Ascending aorta (tissue), 2 donors: ENCODE measurements at regions of chr9 and their contacts with region 1.

Region 1: DNA sequence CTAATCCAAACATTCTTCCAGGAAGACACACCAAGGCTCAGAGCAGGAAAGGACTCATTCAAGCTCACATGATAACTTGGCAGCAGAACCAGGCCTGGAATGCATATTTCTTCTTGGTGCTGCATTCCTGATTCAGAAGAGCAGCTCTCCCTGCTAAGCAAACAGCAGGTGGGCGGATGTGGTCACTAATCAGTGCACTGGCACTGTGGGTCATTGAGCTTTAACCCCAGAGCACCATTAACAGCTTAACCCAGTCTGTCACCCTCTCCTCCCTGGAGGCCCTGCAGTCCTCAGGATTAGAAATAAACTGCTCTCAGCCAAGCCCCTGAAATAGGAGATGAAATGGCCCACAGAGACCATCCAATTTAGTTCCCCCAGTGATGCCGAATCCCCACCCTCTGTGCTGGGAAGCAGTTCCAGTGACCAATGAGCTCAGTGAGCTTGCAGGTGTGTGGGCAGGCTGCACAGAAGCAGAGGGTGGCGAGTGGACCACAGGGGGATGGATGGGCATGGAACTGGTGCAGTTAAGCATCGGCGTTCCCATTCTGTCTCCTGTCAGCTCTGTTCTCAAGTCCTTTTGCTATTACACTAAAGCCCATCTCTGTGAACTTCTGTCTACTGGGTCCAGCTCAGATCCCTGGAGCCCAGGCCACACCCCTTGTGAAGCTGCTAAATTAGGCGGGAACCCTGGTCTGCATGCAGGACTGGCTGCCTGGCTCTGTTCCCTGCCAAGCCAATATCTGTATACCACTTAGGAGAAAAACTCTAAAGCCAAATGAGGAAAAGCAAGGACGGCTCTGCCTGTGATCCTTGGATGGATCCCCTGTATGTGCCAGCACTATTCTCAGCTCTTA is 16.6 kb upstream of the MEGF9 start:
- DNase-seq: peak in 1 of 2 donors; percentile 82
- H3K4me3 ChIP-seq: no peak overlapping the region
- H3K27ac ChIP-seq: peak overlapping the region; percentile 68 to 85
- H3K4me1 ChIP-seq: peaks cover 7 to 24% of the 10 kb centered on the region in 2 donors
- H3K27me3 ChIP-seq: no peaks in the 10 kb centered on the region
- CTCF ChIP-seq: no peak

Region 2: DNA sequence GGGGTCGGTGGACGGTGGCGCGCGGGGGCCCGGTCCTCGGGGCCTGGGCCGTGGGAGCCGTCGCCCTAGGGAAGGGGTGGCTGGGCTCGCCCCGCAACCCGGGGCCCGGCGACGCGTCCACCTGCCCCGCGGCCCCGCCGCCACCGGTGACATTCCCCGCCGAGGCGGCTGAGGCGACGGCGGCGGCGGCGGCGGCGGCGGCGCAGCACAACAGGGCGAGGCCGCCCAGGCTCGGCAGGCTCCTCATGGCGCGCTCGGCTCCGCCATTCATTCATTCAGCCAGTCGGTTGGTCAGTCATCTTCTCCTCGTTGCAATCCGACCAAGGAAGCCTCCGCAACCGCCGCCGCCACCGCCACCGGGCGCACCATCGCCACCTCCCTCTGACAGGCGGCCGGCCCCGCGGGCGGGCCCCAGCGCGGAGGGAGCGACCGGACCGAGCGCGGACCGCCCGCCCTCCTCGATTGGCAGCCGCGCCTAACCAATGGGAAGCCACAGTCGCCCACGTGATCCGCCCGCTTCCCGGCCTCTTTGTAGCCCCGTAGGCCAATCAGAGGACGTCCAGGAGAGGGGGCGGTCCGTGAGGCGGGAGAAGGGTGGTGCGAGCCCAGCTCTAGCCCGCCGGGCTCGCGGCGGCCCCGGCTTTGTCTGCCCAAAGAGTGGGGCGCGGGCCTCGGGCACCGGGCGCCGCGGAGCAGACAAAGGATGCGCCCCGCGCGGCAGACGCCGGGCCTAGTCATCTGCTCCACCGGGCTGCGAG is 16.6 kb before region 1 on chr9 and contains the start of gene MEGF9:
- intact Hi-C with region 1: loop called (anchors 1 kb)
- DNase-seq: peak; percentile 95 to 99
- H3K4me3 ChIP-seq: peak within 1 kb of the TSS; percentile 70 to 82
- H3K27ac ChIP-seq: peak within 1 kb of the TSS; percentile 64 to 73
- H3K4me1 ChIP-seq: peaks cover 4 to 7% of the 10 kb centered on the region in 2 donors
- H3K27me3 ChIP-seq: no peaks in the 10 kb centered on the region
- CTCF ChIP-seq: peak in 1 of 3 experiments; percentile 9
- total RNA-seq, gene MEGF9: 14.3 TPM